ENCODE measurements at regions of chr7 and their contacts with region 1.

Region 1: GRCh38 chr7:111486472-111487142 is 75.7 kb downstream of the IMMP2L start:
- DNase-seq: no peak
- H3K4me3 ChIP-seq: no peak overlapping the region
- H3K27ac ChIP-seq: no peak overlapping the region
- H3K4me1 ChIP-seq: no peaks in the 10 kb centered on the region
- H3K27me3 ChIP-seq: no peaks in the 10 kb centered on the region
- CTCF ChIP-seq: peak; percentile 45 to 70 (median 48)
- EP300 ChIP-seq: no peak
- POLR2A ChIP-seq: no peak

Region 2: GRCh38 chr7:111089822-111090426 is 396.7 kb before region 1 on chr7:
- intact Hi-C with region 1: loop called in 2 of 4 experiments (anchors 5 kb)
- DNase-seq: no peak
- H3K4me3 ChIP-seq: no peak overlapping the region
- H3K27ac ChIP-seq: no peak overlapping the region
- H3K4me1 ChIP-seq: peaks cover 2% of the 10 kb centered on the region
- H3K27me3 ChIP-seq: no peaks in the 10 kb centered on the region
- CTCF ChIP-seq: peak; percentile 16 to 37 (median 35)
- EP300 ChIP-seq: no peak
- POLR2A ChIP-seq: no peak

Region 3: GRCh38 chr7:111150709-111151108 is 335.9 kb before region 1 on chr7:
- intact Hi-C with region 1: loop called in 1 of 4 experiments (anchors 5 kb)
- DNase-seq: no peak
- H3K4me3 ChIP-seq: no peak overlapping the region
- H3K27ac ChIP-seq: no peak overlapping the region
- H3K4me1 ChIP-seq: no peaks in the 10 kb centered on the region
- H3K27me3 ChIP-seq: no peaks in the 10 kb centered on the region
- CTCF ChIP-seq: no peak
- EP300 ChIP-seq: no peak
- POLR2A ChIP-seq: no peak

Measured in ovary (tissue), 10 donors.